ENCODE measurements at regions of chr22 and their contacts with region 1.

Region 1: GRCh38 chr22:25447686-25448434 is 116.6 kb upstream of the GRK3 start:
- DNase-seq: peak; percentile 89
- ATAC-seq: peak; percentile 95
- H3K4me3 Mint-ChIP-seq: peak overlapping the region; percentile 94
- H3K27ac Mint-ChIP-seq: peak overlapping the region; percentile 89
- H3K4me1 Mint-ChIP-seq: peaks cover 44% of the 10 kb centered on the region
- H3K27me3 Mint-ChIP-seq: no peaks in the 10 kb centered on the region
- CTCF ChIP-seq: peak; percentile 42

Region 2: GRCh38 chr22:25362215-25362882 is 85.5 kb before region 1 on chr22:
- CTCF ChIA-PET with region 1: interaction called, 3 read pairs
- POLR2A ChIA-PET with region 1: no interaction called
- intact Hi-C with region 1: loop called (anchors 1 kb)
- DNase-seq: peak; percentile 67
- ATAC-seq: peak; percentile 68
- H3K4me3 Mint-ChIP-seq: no peak overlapping the region
- H3K27ac Mint-ChIP-seq: no peak overlapping the region
- H3K4me1 Mint-ChIP-seq: peaks cover 2% of the 10 kb centered on the region
- H3K27me3 Mint-ChIP-seq: no peaks in the 10 kb centered on the region
- CTCF ChIP-seq: peak; percentile 48

Region 3: DNA sequence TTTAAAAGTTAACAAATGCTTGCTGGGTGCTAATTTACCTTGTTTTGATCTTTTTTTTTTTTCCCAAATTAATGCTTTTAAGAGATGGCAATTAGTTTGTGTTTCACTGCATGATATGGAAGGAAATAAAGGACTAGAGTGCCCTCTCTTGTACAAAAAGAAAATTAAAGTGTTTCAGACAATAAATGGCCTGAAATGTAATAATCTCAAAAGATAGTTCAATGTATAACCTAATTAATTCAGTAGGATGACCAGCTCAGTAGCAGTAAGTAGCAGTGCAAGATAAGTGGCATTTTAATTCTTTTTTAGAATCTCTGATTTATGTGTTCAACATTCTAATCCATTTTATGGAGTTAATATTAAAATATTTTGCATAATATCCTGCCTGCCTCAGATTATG is 254.2 kb after region 1 on chr22:
- CTCF ChIA-PET with region 1: interaction called, 4 read pairs
- POLR2A ChIA-PET with region 1: no interaction called
- intact Hi-C with region 1: loop called (anchors 5 kb)
- DNase-seq: no peak
- ATAC-seq: no peak
- H3K4me3 Mint-ChIP-seq: no peak overlapping the region
- H3K27ac Mint-ChIP-seq: no peak overlapping the region
- H3K4me1 Mint-ChIP-seq: peaks cover 9% of the 10 kb centered on the region
- H3K27me3 Mint-ChIP-seq: no peaks in the 10 kb centered on the region
- CTCF ChIP-seq: no peak

Region 4: GRCh38 chr22:25777870-25778269 is 330.0 kb after region 1 on chr22:
- CTCF ChIA-PET with region 1: interaction called, 12 read pairs
- POLR2A ChIA-PET with region 1: no interaction called
- intact Hi-C with region 1: loop called (anchors 5 kb)
- DNase-seq: no peak
- ATAC-seq: no peak
- H3K4me3 Mint-ChIP-seq: no peak overlapping the region
- H3K27ac Mint-ChIP-seq: no peak overlapping the region
- H3K4me1 Mint-ChIP-seq: peaks cover 3% of the 10 kb centered on the region
- H3K27me3 Mint-ChIP-seq: peaks cover 6% of the 10 kb centered on the region
- CTCF ChIP-seq: no peak

Measured in activated B cell treated with CpG ODN at 0.5 μM for 24 hours (primary cell).